Body of pancreas (tissue), 4 donors: ENCODE measurements at regions of chr17 and their contacts with region 1.

Region 1: GRCh38 chr17:6666077-6666521 is 14.5 kb downstream of the C17orf100 start:
- DNase-seq: peak; percentile 74 to 81 (median 78)
- ATAC-seq: peak; percentile 95
- H3K4me3 ChIP-seq: no peak overlapping the region
- H3K27ac ChIP-seq: no peak overlapping the region
- H3K4me1 ChIP-seq: peaks cover 11% of the 10 kb centered on the region
- H3K27me3 ChIP-seq: no peaks in the 10 kb centered on the region
- CTCF ChIP-seq: peak; percentile 83 to 92 (median 89)
- POLR2A ChIP-seq: no peak

Region 2: DNA sequence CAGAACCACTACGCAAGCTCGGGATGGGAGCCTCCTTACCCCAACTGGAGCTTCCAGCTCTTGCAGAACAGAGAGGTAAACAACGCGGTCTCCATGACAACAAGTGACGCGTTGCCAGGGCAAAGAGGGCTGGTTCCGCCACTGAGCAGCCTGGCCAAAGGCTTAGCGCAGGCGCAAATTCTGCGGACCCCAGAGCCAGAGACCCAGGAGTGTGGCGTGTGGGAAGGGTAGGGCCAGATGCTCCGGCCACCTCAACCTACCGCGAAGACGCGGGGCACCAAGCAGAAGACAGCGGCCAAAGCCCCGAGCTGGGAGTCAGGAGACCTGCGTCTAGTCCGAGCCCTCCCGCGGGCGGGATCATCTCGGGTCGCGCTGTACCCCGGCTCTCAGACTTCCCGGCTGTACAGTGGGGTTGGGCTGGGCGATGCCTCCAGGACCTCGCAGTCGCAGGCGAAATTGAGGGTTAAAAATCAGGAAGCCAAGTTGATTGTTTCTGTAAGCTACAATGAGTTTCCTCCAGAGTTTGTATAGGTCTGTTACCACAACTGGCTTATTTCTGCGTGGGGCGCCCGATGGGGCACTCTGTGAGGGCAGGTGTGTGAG is 165.7 kb after region 1 on chr17 and contains the start of gene TEKT1:
- intact Hi-C with region 1: loop called (anchors 10 kb)
- DNase-seq: peak; percentile 82 to 90 (median 84)
- ATAC-seq: peak; percentile 93
- H3K4me3 ChIP-seq: no peak within 1 kb of the TSS
- H3K27ac ChIP-seq: no peak within 1 kb of the TSS
- H3K4me1 ChIP-seq: peaks cover 9% of the 10 kb centered on the region
- H3K27me3 ChIP-seq: peaks cover 0 to 14% of the 10 kb centered on the region in 2 donors
- CTCF ChIP-seq: no peak
- POLR2A ChIP-seq: no peak
- total RNA-seq, gene TEKT1: not detected

Region 3: DNA sequence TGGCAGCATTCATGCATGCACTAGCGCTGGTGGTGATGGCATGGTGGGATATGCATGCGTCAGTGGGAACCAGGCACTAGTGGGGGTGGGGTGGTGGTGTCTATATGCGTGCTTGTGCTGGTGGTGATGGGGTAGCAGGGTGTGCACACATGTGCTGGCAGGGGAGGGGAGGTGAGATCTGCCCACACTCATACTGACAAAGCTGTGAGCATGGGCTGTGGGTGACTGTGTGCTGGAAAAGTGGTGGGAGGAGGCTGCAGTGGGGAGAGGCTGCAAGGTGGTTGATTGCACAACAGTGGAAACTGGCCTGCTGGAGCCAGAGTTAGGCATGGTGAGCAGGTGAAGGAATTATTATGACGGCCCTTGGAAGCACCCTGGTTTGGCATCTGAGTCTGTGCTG is 196.7 kb after region 1 on chr17:
- intact Hi-C with region 1: no loop called
- DNase-seq: no peak
- ATAC-seq: no peak
- H3K4me3 ChIP-seq: no peak overlapping the region
- H3K27ac ChIP-seq: no peak overlapping the region
- H3K4me1 ChIP-seq: no peaks in the 10 kb centered on the region
- H3K27me3 ChIP-seq: no peaks in the 10 kb centered on the region
- CTCF ChIP-seq: no peak
- POLR2A ChIP-seq: no peak